ENCODE measurements at regions of chr11 and their contacts with region 1.

Region 1: GRCh38 chr11:14300661-14301304 is 58.2 kb downstream of the RRAS2 start:
- DNase-seq: peak; percentile 58
- H3K4me3 ChIP-seq: no peak overlapping the region
- H3K27ac ChIP-seq: no peak overlapping the region
- H3K4me1 ChIP-seq: peaks cover 3% of the 10 kb centered on the region
- H3K27me3 ChIP-seq: no peaks in the 10 kb centered on the region
- CTCF ChIP-seq: peak; percentile 58

Region 2: GRCh38 chr11:14075118-14076078 is 225.4 kb before region 1 on chr11:
- intact Hi-C with region 1: no loop called
- DNase-seq: no peak
- H3K4me3 ChIP-seq: no peak overlapping the region
- H3K27ac ChIP-seq: no peak overlapping the region
- H3K4me1 ChIP-seq: no peaks in the 10 kb centered on the region
- H3K27me3 ChIP-seq: no peaks in the 10 kb centered on the region
- CTCF ChIP-seq: no peak

Region 3: DNA sequence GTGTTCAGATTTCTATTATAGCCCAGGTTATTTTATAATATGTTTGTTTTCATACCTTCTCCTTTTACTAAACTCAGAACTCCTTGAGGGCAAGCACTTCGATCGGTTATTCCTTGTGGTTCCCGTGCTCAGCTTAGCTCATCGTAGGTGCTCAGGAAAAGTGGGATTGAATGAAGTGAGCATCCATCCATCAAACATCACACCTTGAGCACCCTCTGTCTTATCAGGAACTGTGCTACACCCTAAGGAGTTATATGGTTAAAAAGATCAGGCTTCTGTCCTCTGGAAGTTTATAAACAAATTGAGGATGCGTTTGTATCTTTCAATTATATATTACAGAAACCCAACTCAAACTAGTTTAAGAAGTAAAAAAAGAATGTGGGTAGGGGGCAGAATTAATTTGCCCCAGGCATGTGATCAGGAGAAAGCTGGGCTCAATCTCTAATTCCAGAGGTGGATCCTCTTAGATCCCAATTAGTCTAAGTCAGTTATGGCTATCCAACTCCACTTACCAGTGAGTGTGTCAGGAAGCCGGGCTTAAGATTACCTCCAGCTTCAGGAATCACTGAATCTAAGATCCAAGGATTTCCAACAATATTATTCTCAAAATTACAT is 118.1 kb after region 1 on chr11:
- intact Hi-C with region 1: loop called (anchors 2 kb)
- DNase-seq: peak; percentile 22
- H3K4me3 ChIP-seq: no peak overlapping the region
- H3K27ac ChIP-seq: no peak overlapping the region
- H3K4me1 ChIP-seq: no peaks in the 10 kb centered on the region
- H3K27me3 ChIP-seq: no peaks in the 10 kb centered on the region
- CTCF ChIP-seq: peak; percentile 46

Region 4: DNA sequence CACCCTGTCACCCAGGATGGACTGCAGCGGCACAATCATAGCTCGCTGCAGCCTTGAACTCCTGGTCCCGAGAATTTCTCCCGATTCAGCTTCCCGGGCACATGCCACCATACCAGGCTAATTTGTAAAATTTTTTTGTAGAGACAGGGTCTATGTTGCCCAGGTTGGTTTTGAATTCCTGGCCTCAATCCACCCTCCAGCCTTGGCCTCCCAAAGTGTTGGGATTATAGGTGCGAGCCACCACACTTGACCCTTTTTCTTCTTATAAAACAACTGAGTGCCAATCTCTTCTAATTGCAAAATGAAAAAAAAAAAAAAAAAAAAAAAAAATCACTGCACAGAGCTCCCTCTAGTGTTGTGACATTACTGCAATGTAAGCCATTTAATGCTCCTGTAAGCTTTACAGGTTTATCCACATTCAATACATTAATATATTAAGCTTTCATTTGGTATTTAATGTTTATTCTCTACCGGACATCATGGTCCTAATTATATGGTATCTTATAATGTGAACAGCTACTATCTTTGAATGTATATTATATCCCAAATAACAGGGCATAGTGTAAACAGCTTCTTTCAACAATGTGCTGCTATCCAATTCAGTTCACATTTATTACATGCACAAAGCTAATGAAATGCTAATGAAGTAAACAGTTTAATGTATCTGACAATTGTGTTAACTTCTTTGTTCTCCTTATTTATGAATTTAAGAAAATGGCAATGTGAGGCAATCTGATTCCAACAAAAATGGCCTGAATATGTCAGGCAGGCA is 154.3 kb after region 1 on chr11:
- intact Hi-C with region 1: loop called (anchors 2 kb)
- DNase-seq: no peak
- H3K4me3 ChIP-seq: no peak overlapping the region
- H3K27ac ChIP-seq: no peak overlapping the region
- H3K4me1 ChIP-seq: no peaks in the 10 kb centered on the region
- H3K27me3 ChIP-seq: no peaks in the 10 kb centered on the region
- CTCF ChIP-seq: peak; percentile 46

Measured in colonic mucosa (tissue), 4 donors.